Activated T-helper 2 cell treated with anti-CD3 and anti-CD28 coated beads, Interferon-gamma antibody, Interleukin-2, Interleukin-4, amounts not matched to agents 10 μg/mL and 5 μg/mL and 100 μg/mL, durations not matched to agents 14 hours and 24 hours and 36 hours (primary cell): ENCODE measurements at regions of chrX and their contacts with region 1.

Region 1: GRCh38 chrX:20442597-20442996 is 175.9 kb upstream of the RPS6KA3 start:
- DNase-seq: peak; percentile 66
- H3K4me3 Mint-ChIP-seq: no peak overlapping the region
- H3K27ac Mint-ChIP-seq: no peak overlapping the region
- H3K4me1 Mint-ChIP-seq: peaks cover 42% of the 10 kb centered on the region
- H3K27me3 Mint-ChIP-seq: no peaks in the 10 kb centered on the region

Region 2: DNA sequence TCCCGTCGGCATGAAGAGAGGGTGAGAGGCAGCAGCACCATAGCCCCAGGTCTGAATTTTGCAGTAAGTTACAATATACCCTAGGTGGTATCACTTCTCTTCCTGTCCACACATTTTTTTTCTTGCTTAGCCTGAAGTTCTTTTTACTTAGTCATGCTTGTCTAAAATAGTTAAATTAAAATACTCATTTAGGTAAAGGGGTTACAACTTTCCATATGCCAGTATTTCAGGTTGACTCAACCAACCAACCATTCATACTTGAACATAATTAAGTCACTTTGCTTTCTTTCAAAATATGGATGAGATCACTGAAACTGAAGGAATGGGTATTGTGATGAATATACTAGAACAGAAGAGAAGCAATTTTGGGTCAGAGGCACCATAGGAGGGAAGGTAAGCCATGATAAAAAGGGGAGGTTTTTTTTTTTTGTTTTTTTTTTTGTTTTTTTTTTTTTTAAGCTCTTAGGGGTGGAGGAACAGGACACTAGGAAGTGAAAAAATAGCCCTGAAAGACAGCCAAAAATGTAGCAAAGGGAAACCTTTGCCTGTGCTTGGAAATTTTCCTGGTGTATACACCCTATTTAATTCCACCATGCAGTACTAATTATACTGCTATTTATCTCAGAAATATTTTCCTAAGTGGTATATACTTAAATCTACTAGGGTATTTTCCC is 217.6 kb before region 1 on chrX:
- intact Hi-C with region 1: loop called (anchors 1 kb)
- DNase-seq: no peak
- H3K4me3 Mint-ChIP-seq: no peak overlapping the region
- H3K27ac Mint-ChIP-seq: peak overlapping the region; percentile 66
- H3K4me1 Mint-ChIP-seq: peaks cover 25% of the 10 kb centered on the region
- H3K27me3 Mint-ChIP-seq: no peaks in the 10 kb centered on the region

Region 3: DNA sequence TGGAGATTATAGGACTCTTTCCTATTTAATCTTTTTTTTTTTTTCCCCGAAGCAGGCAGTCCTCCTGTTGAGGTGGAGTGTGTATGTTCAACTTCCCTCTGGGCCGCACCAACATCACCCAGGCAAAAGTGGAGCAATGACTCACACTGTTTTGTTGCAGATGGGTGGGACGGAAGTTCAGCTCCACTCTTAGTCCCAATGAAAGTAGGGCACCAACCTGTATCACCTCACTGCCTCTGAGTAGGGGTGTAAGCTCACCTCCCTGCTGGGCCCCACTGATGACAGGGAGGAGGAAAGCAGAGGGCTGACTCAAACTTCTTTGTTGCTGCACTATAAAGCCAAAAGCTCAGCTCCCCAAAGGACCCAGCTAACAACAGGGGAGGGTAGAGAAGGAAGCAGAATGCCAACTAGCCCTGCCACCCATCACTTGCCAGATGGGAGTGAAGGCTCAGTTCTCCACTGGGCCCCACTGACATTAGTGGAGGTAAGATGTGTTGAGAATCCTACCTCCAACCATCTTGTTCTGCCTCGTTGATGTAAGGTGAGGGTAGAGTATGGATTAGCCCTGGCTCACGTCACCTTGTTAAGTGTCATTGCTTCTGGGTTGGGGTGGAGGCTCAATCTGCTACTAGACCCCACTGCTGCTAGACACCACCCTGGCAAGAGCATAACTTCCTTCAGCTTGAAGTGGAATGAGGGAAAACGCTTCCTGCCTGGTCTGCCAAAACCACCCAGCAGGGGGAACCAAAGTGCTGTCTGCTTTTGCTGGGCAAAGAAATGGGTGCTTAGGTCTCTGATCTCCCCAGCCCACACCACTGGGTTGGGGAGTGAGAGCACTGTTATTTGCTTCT is 190.0 kb before region 1 on chrX:
- intact Hi-C with region 1: loop called (anchors 1 kb)
- DNase-seq: peak; percentile 44
- H3K4me3 Mint-ChIP-seq: no peak overlapping the region
- H3K27ac Mint-ChIP-seq: peak overlapping the region; percentile 60
- H3K4me1 Mint-ChIP-seq: peaks cover 28% of the 10 kb centered on the region
- H3K27me3 Mint-ChIP-seq: no peaks in the 10 kb centered on the region

Region 4: GRCh38 chrX:20266810-20267606 is 175.6 kb before region 1 on chrX and contains the start of gene RPS6KA3:
- intact Hi-C with region 1: loop called (anchors 2 kb)
- DNase-seq: peak; percentile 85
- H3K4me3 Mint-ChIP-seq: peak within 1 kb of the TSS; percentile 95
- H3K27ac Mint-ChIP-seq: peak within 1 kb of the TSS; percentile 99
- H3K4me1 Mint-ChIP-seq: peaks cover 16% of the 10 kb centered on the region
- H3K27me3 Mint-ChIP-seq: peaks cover 13% of the 10 kb centered on the region
- total RNA-seq, gene RPS6KA3: 53.1 and 55.3 TPM in 2 replicates

Region 5: GRCh38 chrX:20382518-20383297 is 59.9 kb before region 1 on chrX:
- intact Hi-C with region 1: loop called (anchors 5 kb)
- DNase-seq: peak; percentile 9
- H3K4me3 Mint-ChIP-seq: no peak overlapping the region
- H3K27ac Mint-ChIP-seq: peak overlapping the region; percentile 65
- H3K4me1 Mint-ChIP-seq: peaks cover 25% of the 10 kb centered on the region
- H3K27me3 Mint-ChIP-seq: no peaks in the 10 kb centered on the region

Region 6: GRCh38 chrX:20515841-20516461 is 73.4 kb after region 1 on chrX:
- intact Hi-C with region 1: no loop called
- DNase-seq: peak; percentile 10
- H3K4me3 Mint-ChIP-seq: no peak overlapping the region
- H3K27ac Mint-ChIP-seq: peak overlapping the region; percentile 89
- H3K4me1 Mint-ChIP-seq: peaks cover 37% of the 10 kb centered on the region
- H3K27me3 Mint-ChIP-seq: peaks cover 17% of the 10 kb centered on the region